Activated CD4-positive, alpha-beta T cell treated with anti-CD3 and anti-CD28 coated beads for 36 hours (primary cell): ENCODE measurements at regions of chr11 and their contacts with region 1.

Region 1: DNA sequence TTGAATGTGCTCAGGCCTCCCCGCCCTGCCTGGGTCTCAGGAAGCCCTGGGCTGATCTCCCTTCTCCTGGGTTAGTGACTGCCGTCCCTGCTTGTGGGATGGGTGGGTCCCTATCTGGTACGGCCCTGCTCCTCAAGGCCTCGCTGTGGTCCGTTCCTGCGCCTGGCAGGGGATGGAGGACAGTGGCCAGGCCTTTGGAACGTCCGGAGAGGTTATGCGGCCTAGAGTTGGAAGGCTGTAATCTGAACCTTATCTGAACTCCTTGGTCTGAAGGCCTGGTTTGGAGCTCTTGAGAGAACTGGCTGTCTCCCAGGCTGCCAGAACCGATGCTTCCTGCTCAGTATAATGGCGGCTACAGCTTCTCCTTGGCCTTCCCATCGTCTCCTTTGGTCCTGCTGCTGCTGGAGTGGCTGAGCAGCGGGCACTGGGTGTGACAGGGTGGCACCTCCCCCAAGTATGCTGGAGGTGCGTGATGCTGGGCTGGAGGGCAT is 72.8 kb downstream of the FLI1 start:
- DNase-seq: no peak
- ATAC-seq: no peak
- H3K4me3 Mint-ChIP-seq: no peak overlapping the region
- H3K27ac Mint-ChIP-seq: no peak overlapping the region
- H3K4me1 Mint-ChIP-seq: peaks cover 10% of the 10 kb centered on the region
- H3K27me3 Mint-ChIP-seq: no peaks in the 10 kb centered on the region

Region 2: DNA sequence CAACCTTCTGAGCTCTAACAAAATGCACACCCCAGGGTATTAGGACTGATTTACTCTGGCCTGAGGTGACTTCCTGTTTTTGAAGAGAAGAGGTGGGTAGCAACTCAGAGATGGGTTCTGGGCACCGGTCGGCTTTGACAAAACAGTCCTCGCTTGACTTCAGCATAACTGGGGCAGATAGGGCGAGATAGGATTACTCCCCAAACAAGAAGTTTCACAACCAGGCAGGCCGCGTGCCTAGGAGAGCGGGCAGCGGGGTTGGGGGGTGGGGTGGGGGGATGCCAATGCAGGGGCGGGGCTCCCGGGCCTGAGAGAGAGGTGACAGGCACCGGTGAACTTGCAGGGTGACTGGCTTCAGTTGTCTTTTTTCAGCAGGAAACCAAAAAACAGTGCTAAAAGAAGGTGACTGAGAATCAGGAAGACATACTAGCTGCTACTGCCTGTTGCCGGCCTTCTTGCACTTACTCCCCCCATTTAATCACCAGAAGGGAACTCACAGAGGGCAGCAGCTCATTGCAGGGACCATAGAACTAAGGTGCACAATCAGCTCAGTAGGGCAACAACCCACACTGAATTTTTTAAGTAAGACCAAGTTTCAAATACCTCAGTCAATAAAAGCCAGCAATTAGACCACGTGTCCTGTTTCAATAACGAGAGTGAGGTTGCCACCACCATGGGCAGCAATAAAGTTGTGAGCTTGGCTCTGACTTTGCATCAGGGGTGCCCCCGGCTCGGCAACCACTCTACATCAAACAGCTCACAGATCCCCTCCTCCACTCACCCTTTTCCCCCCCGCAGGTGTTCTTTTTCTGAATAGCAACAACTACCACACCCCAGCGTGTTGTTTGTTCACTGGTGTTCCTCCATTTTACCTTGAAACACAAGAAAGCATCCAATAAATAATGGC is 142.1 kb before region 1 on chr11:
- CTCF ChIA-PET with region 1: no interaction called
- POLR2A ChIA-PET with region 1: no interaction called
- intact Hi-C with region 1: no loop called
- DNase-seq: peak; percentile 70
- ATAC-seq: peak; percentile 35
- H3K4me3 Mint-ChIP-seq: peak overlapping the region; percentile 58
- H3K27ac Mint-ChIP-seq: peak overlapping the region; percentile 90
- H3K4me1 Mint-ChIP-seq: peaks cover 95% of the 10 kb centered on the region
- H3K27me3 Mint-ChIP-seq: no peaks in the 10 kb centered on the region

Region 3: DNA sequence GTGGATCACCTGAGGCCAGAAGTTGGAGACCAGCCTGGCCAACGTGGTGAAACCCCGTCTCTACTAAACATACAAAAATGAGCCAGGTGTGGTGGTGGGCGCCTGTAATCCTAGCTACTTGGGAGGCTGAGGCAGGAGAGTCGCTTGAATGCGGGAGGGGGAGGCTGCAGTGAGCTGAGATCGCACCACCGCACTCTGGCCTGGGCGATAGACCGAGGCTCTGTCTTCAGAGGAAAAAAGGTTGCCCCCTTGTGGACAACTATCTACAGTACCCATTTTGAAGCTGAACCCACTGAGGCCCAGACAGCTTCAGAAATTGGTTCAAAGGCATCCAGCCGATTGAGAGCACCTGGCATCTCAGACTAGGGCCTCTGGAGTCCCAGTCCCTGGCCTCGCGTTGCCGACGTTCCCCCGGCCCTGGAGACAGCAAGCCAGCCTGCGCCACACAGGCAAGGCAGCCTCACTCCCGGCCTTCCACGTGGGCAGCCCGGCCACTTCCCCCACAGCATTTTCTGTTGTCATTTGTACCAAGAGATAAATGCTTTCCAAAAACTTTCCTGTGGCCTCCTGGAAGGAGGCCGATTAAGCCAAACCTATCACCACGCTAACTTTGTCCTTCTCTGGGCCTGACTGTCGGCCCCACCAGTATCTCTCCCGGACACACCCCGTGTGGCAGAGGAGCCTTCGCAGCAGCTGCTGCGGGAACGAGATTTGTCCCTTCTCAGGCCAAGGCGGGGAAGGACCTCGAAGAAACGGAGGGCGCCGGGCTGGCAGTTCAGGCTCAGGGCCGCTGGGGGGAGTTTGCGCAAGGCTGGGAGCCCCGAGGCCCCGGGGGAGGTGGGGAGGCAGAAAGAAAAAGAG is 10.0 kb after region 1 on chr11:
- CTCF ChIA-PET with region 1: interaction called, 14 read pairs
- POLR2A ChIA-PET with region 1: no interaction called
- intact Hi-C with region 1: no loop called
- DNase-seq: peak; percentile 59
- ATAC-seq: peak; percentile 74
- H3K4me3 Mint-ChIP-seq: no peak overlapping the region
- H3K27ac Mint-ChIP-seq: peak overlapping the region; percentile 43
- H3K4me1 Mint-ChIP-seq: peaks cover 47% of the 10 kb centered on the region
- H3K27me3 Mint-ChIP-seq: no peaks in the 10 kb centered on the region

Region 4: DNA sequence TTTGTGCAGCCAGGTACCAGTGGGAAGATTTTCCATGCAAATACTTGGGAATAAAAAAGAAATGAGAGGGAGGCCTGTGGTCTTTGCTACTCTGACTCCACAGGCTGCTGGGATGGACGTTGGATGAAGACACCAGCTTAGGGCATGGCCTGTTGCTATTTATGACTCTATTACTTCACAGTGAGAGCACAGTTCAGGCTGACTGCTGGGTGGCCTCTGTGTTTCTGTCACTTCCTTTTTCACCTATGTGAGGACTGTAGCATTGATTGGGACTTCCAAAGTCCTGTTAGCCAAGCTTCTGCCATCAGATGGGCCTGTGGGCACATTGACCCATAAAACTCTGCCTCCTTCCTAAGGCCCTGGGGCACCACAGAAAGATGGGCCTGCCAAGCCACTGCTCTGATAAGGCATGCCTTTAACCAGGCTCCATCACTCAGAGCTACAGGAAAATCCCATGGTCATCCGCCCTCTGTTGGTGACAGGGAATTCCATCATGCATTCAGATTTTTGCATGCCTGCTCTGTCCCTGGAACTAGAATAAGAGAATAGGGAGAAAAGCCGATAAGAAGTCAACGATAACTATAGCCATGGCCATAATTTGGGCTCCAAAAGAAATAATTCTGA is 35.8 kb after region 1 on chr11:
- CTCF ChIA-PET with region 1: no interaction called
- POLR2A ChIA-PET with region 1: no interaction called
- intact Hi-C with region 1: no loop called
- DNase-seq: no peak
- ATAC-seq: no peak
- H3K4me3 Mint-ChIP-seq: no peak overlapping the region
- H3K27ac Mint-ChIP-seq: no peak overlapping the region
- H3K4me1 Mint-ChIP-seq: peaks cover 17% of the 10 kb centered on the region
- H3K27me3 Mint-ChIP-seq: no peaks in the 10 kb centered on the region

Region 5: GRCh38 chr11:129023970-129024676 is 257.5 kb after region 1 on chr11:
- CTCF ChIA-PET with region 1: no interaction called
- POLR2A ChIA-PET with region 1: no interaction called
- intact Hi-C with region 1: no loop called
- DNase-seq: peak; percentile 33
- ATAC-seq: peak; percentile 44
- H3K4me3 Mint-ChIP-seq: peak overlapping the region; percentile 36
- H3K27ac Mint-ChIP-seq: peak overlapping the region; percentile 37
- H3K4me1 Mint-ChIP-seq: peaks cover 35% of the 10 kb centered on the region
- H3K27me3 Mint-ChIP-seq: no peaks in the 10 kb centered on the region